Heart left ventricle (tissue), 16 donors: ENCODE measurements at regions of chr9 and their contacts with region 1.

Region 1: DNA sequence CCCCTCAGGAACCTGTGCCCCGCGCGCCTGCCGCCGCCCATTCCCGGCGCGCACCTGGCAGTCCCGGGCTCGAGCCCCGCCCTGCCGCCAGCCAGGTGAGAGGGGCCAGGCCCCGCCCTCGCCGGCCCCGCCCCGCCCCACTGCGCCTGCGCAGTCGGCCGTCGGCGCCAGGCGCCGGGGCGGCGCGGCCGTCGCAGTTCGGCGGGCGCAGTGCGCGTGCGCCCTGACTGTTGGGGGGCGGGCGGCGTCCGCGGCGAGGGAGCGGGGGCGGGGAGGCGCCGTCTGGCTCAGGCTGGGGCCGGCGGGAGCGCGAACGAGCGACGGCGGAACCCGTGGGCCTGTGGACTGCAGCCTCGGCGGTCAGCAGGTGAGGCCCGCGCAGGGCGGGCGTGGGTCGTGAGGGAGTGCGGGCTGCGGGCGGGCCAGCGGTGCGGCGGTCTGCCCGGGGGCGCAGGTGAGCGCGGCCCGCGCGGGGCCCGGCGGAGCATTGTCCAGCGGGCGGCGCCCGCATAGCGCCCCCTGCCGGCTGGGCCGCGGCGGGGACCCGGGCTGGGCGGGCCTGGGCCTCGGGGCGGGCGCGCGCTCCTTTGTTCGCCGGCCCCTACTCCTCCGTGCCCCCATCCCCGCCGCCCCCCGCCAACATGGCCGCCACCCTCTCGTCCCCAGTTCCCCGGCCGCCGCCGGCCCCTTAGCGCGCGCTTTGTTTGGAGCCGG is at the start of gene SPIN1:
- DNase-seq: peak; percentile 80 to 93 (median 85)
- ATAC-seq: peak; percentile 65 to 92 (median 84)
- H3K4me3 ChIP-seq: peak within 1 kb of the TSS; percentile 70 to 99 (median 92)
- H3K27ac ChIP-seq: peak within 1 kb of the TSS; percentile 78 to 95 (median 90)
- H3K4me1 ChIP-seq: peaks cover 0 to 47% (median 23%) of the 10 kb centered on the region in 12 donors
- H3K27me3 ChIP-seq: no peaks in the 10 kb centered on the region
- CTCF ChIP-seq: peak in 10 of 12 donors; percentile 20 to 82 (median 50)
- POLR2A ChIP-seq: no peak
- total RNA-seq, gene SPIN1: 32.8 to 61.2 (median 44.5) TPM

Region 2: DNA sequence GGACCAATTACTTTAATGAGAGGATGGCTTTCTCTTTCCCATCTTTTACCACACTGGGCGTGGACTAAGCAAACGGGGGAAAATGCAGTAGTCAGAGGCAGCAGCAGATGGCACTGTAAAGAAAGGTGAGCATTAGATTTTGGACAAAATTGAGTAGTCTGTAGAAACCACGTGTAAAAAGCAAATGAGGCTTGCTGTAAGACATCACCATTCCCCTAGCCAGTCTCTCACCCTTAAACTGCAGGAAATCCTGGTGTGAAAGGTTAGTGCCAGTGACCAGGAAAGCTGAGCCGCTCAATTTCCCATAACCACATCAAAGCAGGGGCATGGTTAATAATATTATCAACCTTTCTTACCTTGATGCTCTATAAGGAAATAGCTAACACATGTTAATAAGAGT is 281.8 kb before region 1 on chr9:
- intact Hi-C with region 1: loop called in 1 of 10 experiments (anchors 10 kb)
- DNase-seq: no peak
- ATAC-seq: peak in 1 of 4 donors; percentile 55
- H3K4me3 ChIP-seq: no peak overlapping the region
- H3K27ac ChIP-seq: no peak overlapping the region
- H3K4me1 ChIP-seq: no peaks in the 10 kb centered on the region
- H3K27me3 ChIP-seq: peaks cover 0 to 19% (median 0%) of the 10 kb centered on the region in 9 donors
- CTCF ChIP-seq: peak in 11 of 12 donors; percentile 17 to 59 (median 41)
- POLR2A ChIP-seq: no peak

Region 3: GRCh38 chr9:88173378-88173999 is 214.8 kb before region 1 on chr9:
- intact Hi-C with region 1: loop called in 5 of 10 experiments (anchors 5 to 10 kb)
- DNase-seq: peak in 4 of 5 donors; percentile 25 to 56 (median 52)
- ATAC-seq: peak in 3 of 4 donors; percentile 53 to 71 (median 66)
- H3K4me3 ChIP-seq: no peak overlapping the region
- H3K27ac ChIP-seq: no peak overlapping the region
- H3K4me1 ChIP-seq: no peaks in the 10 kb centered on the region
- H3K27me3 ChIP-seq: peaks cover 0 to 2% (median 0%) of the 10 kb centered on the region in 9 donors
- CTCF ChIP-seq: peak; percentile 34 to 83 (median 70)
- POLR2A ChIP-seq: no peak

Region 4: GRCh38 chr9:88193766-88194165 is 194.6 kb before region 1 on chr9:
- intact Hi-C with region 1: loop called in 1 of 10 experiments (anchors 5 kb)
- DNase-seq: peak in 1 of 5 donors; percentile 15
- ATAC-seq: peak; percentile 92 to 97 (median 95)
- H3K4me3 ChIP-seq: no peak overlapping the region
- H3K27ac ChIP-seq: peak overlapping the region in 9 of 12 donors; percentile 32 to 80 (median 67)
- H3K4me1 ChIP-seq: peaks cover 0 to 18% (median 2%) of the 10 kb centered on the region in 12 donors
- H3K27me3 ChIP-seq: no peaks in the 10 kb centered on the region
- CTCF ChIP-seq: no peak
- POLR2A ChIP-seq: no peak

Region 5: DNA sequence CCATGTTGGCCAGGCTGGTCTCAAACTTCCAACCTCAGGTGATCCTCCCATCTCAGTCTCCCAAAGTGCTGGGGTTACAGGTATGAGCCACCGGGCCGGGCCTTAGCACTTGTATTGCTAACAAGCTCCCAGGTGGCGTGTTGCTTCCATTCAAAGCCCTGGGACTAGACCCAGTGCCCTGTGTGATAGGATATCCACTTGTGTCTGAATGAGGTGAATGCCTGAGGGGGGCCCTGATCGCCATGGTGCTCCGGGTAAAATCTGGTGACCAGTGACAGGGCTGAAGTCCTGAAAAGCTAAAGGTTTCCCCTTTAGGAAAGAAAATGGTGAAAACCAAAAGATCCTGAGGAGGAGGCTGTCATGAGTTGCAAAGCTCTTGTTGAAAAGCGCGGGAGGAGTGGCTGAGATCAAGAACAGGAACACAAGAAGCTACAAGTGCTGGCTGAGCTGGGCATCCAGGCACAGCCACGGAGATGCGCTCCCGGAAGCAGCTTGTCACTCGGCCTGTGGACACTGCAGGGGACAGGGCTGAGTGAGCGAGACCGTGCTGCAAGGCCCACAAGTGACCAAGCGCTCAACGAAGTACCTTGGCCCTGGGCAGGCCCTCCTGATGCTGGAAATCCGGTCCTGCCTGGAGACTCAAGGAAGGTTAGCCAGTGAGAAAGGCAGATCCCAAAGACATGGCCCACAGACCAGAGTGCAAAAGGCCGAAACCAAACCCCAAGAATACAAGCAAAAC is 106.8 kb after region 1 on chr9:
- intact Hi-C with region 1: no loop called
- DNase-seq: no peak
- ATAC-seq: no peak
- H3K4me3 ChIP-seq: no peak overlapping the region
- H3K27ac ChIP-seq: no peak overlapping the region
- H3K4me1 ChIP-seq: peaks cover 0 to 14% (median 0%) of the 10 kb centered on the region in 12 donors
- H3K27me3 ChIP-seq: no peaks in the 10 kb centered on the region
- CTCF ChIP-seq: no peak
- POLR2A ChIP-seq: no peak

Region 6: GRCh38 chr9:88534456-88535261 is 146.3 kb after region 1 on chr9 and contains the start of gene NXNL2:
- intact Hi-C with region 1: loop called in 1 of 10 experiments (anchors 10 kb)
- DNase-seq: peak; percentile 53 to 87 (median 59)
- ATAC-seq: peak in 3 of 4 donors; percentile 66 to 78 (median 71)
- H3K4me3 ChIP-seq: peak within 1 kb of the TSS; percentile 17 to 58 (median 46)
- H3K27ac ChIP-seq: peak within 1 kb of the TSS in 6 of 12 donors; percentile 19 to 76 (median 54)
- H3K4me1 ChIP-seq: peaks cover 3 to 31% (median 11%) of the 10 kb centered on the region in 12 donors
- H3K27me3 ChIP-seq: peaks cover 0 to 44% (median 20%) of the 10 kb centered on the region in 9 donors
- CTCF ChIP-seq: no peak
- POLR2A ChIP-seq: no peak
- total RNA-seq, gene NXNL2: not detected